ENCODE measurements at regions of chr12 and their contacts with region 1.

Region 1: DNA sequence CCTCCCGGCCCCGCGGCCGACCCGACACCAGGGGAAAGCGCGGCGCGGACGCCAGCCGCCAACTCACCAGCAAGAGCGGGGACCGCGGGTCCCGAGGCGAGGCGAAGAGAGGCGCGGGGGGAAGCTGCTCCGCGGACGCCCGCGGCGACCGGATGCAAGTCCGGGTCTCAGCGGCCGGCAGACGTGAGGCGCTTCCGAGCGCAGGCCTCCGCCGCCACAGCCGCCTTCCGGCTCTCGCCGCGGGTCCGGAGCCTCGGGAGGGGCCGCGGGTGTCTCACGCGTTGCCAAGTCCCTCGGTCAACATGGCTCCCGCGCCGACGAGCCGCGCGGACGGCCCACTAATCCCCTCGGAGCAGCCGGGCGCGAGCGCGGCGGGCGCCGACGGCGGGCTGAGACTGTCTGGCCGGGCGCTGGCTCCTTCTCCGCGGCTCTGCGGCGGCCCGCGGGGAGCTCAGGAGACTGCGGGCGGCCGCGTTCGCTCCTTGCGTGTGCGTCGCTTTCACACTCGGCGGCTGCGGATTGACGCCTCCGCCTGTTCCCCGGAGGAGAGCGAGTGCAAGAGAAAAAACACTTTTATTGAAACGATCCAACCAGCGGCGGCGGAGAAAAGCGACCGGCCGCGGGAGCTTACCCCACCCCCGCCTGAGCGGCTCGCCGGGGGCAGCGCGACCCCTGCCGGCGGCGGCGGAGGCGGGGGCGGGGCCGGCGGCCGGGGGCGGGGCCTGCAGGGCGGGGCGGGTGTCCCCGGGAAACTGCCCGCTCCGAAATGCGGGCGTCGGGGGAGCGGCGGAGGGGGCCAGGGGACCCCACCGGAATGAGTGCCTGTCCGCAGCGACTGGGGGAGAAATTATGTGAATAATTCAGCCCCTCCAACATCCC is at the start of gene CDK17:
- DNase-seq: peak; percentile 69
- H3K4me3 ChIP-seq: peak within 1 kb of the TSS; percentile 94
- H3K27ac ChIP-seq: peak within 1 kb of the TSS; percentile 93
- H3K27me3 ChIP-seq: no peaks in the 10 kb centered on the region
- CTCF ChIP-seq: peak; percentile 40
- polyA plus RNA-seq, gene CDK17: 50.2 and 67.8 TPM in 2 replicates

Region 2: GRCh38 chr12:96308881-96309280 is 91.3 kb before region 1 on chr12:
- CTCF ChIA-PET with region 1: no interaction called
- POLR2A ChIA-PET with region 1: no interaction called
- DNase-seq: no peak
- H3K4me3 ChIP-seq: no peak overlapping the region
- H3K27ac ChIP-seq: no peak overlapping the region
- H3K27me3 ChIP-seq: no peaks in the 10 kb centered on the region
- CTCF ChIP-seq: no peak

Region 3: GRCh38 chr12:96419576-96420271 is 19.6 kb after region 1 on chr12:
- CTCF ChIA-PET with region 1: interaction called, 11 read pairs
- POLR2A ChIA-PET with region 1: interaction called, 24 read pairs
- DNase-seq: no peak
- H3K4me3 ChIP-seq: no peak overlapping the region
- H3K27ac ChIP-seq: no peak overlapping the region
- H3K27me3 ChIP-seq: no peaks in the 10 kb centered on the region
- CTCF ChIP-seq: no peak

Region 4: GRCh38 chr12:96427269-96427729 is 27.1 kb after region 1 on chr12:
- CTCF ChIA-PET with region 1: interaction called, 7 read pairs
- POLR2A ChIA-PET with region 1: interaction called, 24 read pairs
- DNase-seq: peak; percentile 100
- H3K4me3 ChIP-seq: peak overlapping the region; percentile 63
- H3K27ac ChIP-seq: peak overlapping the region; percentile 100
- H3K27me3 ChIP-seq: no peaks in the 10 kb centered on the region
- CTCF ChIP-seq: no peak

Measured in AG04450 (cell line).